Calu3 (cell line): ENCODE measurements at regions of chr12 and their contacts with region 1.

Region 1: GRCh38 chr12:92145731-92146496 is at the start of gene BTG1:
- DNase-seq: peak; percentile 99
- H3K4me3 Mint-ChIP-seq: peak within 1 kb of the TSS; percentile 87
- H3K27ac Mint-ChIP-seq: peak within 1 kb of the TSS; percentile 99
- H3K4me1 Mint-ChIP-seq: peaks cover 17% of the 10 kb centered on the region
- H3K27me3 Mint-ChIP-seq: peaks cover 10% of the 10 kb centered on the region
- CTCF ChIP-seq: no peak
- total RNA-seq, gene BTG1: 123 and 131 TPM in 2 replicates

Region 2: GRCh38 chr12:91811481-91812287 is 334.2 kb before region 1 on chr12:
- CTCF ChIA-PET with region 1: interaction called, 10 read pairs
- intact Hi-C with region 1: loop called (anchors 2 kb)
- DNase-seq: peak; percentile 82
- H3K4me3 Mint-ChIP-seq: no peak overlapping the region
- H3K27ac Mint-ChIP-seq: no peak overlapping the region
- H3K4me1 Mint-ChIP-seq: no peaks in the 10 kb centered on the region
- H3K27me3 Mint-ChIP-seq: no peaks in the 10 kb centered on the region
- CTCF ChIP-seq: peak; percentile 90

Region 3: GRCh38 chr12:92078167-92079053 is 67.5 kb before region 1 on chr12:
- CTCF ChIA-PET with region 1: no interaction called
- intact Hi-C with region 1: no loop called
- DNase-seq: no peak
- H3K4me3 Mint-ChIP-seq: no peak overlapping the region
- H3K27ac Mint-ChIP-seq: peak overlapping the region; percentile 75
- H3K4me1 Mint-ChIP-seq: peaks cover 80% of the 10 kb centered on the region
- H3K27me3 Mint-ChIP-seq: no peaks in the 10 kb centered on the region
- CTCF ChIP-seq: no peak

Region 4: GRCh38 chr12:92363295-92364146 is 217.6 kb after region 1 on chr12:
- CTCF ChIA-PET with region 1: no interaction called
- intact Hi-C with region 1: loop called (anchors 10 kb)
- DNase-seq: no peak
- H3K4me3 Mint-ChIP-seq: no peak overlapping the region
- H3K27ac Mint-ChIP-seq: no peak overlapping the region
- H3K4me1 Mint-ChIP-seq: peaks cover 24% of the 10 kb centered on the region
- H3K27me3 Mint-ChIP-seq: no peaks in the 10 kb centered on the region
- CTCF ChIP-seq: no peak

Region 5: DNA sequence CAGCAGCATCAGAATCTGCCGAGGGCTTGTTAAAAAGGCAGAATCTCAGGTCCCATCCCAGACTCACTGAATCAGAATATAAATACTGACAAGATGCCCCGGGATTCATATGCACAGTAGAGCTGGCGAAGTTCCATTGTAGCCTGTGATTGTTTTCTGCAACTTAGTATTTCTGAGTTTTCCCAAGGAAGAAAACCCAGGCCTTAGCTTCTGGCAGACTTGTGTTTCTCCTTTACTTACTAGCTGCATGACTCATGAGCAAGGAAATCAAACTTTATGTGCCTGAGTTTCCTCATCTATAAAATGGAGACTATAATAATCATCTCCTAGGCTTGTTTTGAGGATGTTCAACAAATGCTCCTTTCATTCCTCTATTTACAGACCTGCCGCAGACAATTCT is 278.4 kb after region 1 on chr12:
- CTCF ChIA-PET with region 1: no interaction called
- intact Hi-C with region 1: loop called (anchors 5 kb)
- DNase-seq: no peak
- H3K4me3 Mint-ChIP-seq: no peak overlapping the region
- H3K27ac Mint-ChIP-seq: no peak overlapping the region
- H3K4me1 Mint-ChIP-seq: peaks cover 37% of the 10 kb centered on the region
- H3K27me3 Mint-ChIP-seq: no peaks in the 10 kb centered on the region
- CTCF ChIP-seq: no peak

Region 6: GRCh38 chr12:92539113-92539749 is 393.3 kb after region 1 on chr12:
- CTCF ChIA-PET with region 1: interaction called, 4 read pairs
- intact Hi-C with region 1: loop called (anchors 1 kb)
- DNase-seq: peak; percentile 63
- H3K4me3 Mint-ChIP-seq: peak overlapping the region; percentile 6
- H3K27ac Mint-ChIP-seq: peak overlapping the region; percentile 95
- H3K4me1 Mint-ChIP-seq: peaks cover 74% of the 10 kb centered on the region
- H3K27me3 Mint-ChIP-seq: no peaks in the 10 kb centered on the region
- CTCF ChIP-seq: no peak